ENCODE measurements at regions of chr11 and their contacts with region 1.

Region 1: GRCh38 chr11:82867495-82868082 is 32.6 kb downstream of the PRCP start:
- DNase-seq: peak; percentile 72
- H3K4me3 Mint-ChIP-seq: no peak overlapping the region
- H3K27ac Mint-ChIP-seq: no peak overlapping the region
- H3K4me1 Mint-ChIP-seq: peaks cover 11% of the 10 kb centered on the region
- H3K27me3 Mint-ChIP-seq: peaks cover 2% of the 10 kb centered on the region

Region 2: GRCh38 chr11:82790723-82791484 is 76.7 kb before region 1 on chr11:
- CTCF ChIA-PET with region 1: no interaction called
- POLR2A ChIA-PET with region 1: no interaction called
- DNase-seq: no peak
- H3K4me3 Mint-ChIP-seq: no peak overlapping the region
- H3K27ac Mint-ChIP-seq: no peak overlapping the region
- H3K4me1 Mint-ChIP-seq: no peaks in the 10 kb centered on the region
- H3K27me3 Mint-ChIP-seq: no peaks in the 10 kb centered on the region

Region 3: DNA sequence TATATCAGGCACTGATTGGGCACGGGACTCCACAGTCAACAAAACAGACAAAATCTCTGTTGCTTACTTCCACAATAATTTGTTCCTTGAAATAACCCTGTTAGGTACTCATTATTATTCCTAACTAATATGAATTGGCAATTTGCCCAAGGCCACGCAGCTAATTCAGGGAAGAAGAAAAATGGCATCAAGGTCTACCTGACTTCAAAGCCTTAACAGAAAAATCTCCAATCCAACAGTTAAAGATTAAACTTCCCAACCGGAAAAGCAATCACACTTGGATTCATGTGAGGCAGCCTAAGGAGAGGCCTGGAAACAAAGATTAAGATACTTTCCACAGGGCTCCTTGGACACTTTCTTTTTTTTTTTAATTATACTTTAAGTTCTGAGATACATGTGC is 36.2 kb before region 1 on chr11:
- CTCF ChIA-PET with region 1: no interaction called
- POLR2A ChIA-PET with region 1: no interaction called
- DNase-seq: no peak
- H3K4me3 Mint-ChIP-seq: no peak overlapping the region
- H3K27ac Mint-ChIP-seq: no peak overlapping the region
- H3K4me1 Mint-ChIP-seq: no peaks in the 10 kb centered on the region
- H3K27me3 Mint-ChIP-seq: no peaks in the 10 kb centered on the region

Region 4: DNA sequence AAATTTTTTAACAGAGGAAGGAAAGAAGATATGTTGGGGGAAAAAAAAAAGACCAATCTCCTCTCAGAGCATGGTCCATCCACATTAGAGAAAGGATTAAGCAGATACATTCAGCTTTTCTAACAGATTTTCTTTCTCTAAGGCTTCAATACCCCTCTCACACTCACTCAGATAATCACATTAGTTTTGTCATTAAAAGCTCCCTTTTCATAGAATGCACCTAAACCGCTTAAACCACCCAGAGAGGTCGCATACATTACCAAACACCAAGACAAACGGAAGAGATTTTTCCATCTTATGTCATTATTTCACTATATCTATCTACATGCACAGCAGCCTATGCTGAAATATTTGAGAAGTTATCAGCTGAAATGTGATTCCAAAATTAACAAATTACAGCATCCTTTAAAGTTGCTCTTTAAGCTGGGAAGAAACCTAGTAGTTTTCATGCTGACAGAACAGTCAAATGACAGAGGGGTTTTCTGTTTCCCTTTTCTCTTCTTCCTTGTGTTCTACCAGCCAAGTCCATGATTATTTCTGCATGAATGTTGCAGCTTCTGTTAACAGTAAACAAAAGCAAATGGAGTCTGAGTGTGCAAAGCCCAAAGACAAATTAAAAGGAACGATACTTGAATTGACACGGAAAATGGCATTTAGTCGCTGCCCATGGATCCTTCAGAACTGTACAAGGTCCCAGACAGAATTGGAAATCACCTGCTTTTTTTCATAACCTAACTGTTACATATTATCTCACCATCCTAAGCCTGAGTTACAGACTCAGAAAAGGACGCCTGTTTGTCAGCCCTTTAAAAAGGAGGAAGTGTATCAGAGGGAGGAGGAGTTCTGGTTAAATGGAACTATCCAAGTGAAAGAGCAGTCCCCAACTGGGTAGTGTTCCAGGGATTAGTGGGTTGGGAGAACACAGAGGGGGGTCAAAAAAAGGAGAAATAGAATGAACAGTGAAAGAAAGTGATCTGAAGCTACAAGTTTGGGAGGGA is 21.9 kb before region 1 on chr11:
- CTCF ChIA-PET with region 1: interaction called, 13 read pairs
- POLR2A ChIA-PET with region 1: interaction called, 3 read pairs
- DNase-seq: no peak
- H3K4me3 Mint-ChIP-seq: no peak overlapping the region
- H3K27ac Mint-ChIP-seq: no peak overlapping the region
- H3K4me1 Mint-ChIP-seq: no peaks in the 10 kb centered on the region
- H3K27me3 Mint-ChIP-seq: no peaks in the 10 kb centered on the region

Region 5: GRCh38 chr11:82883853-82884252 is 16.3 kb after region 1 on chr11:
- CTCF ChIA-PET with region 1: interaction called, 19 read pairs
- POLR2A ChIA-PET with region 1: no interaction called
- DNase-seq: no peak
- H3K4me3 Mint-ChIP-seq: no peak overlapping the region
- H3K27ac Mint-ChIP-seq: no peak overlapping the region
- H3K4me1 Mint-ChIP-seq: no peaks in the 10 kb centered on the region
- H3K27me3 Mint-ChIP-seq: no peaks in the 10 kb centered on the region

Region 6: DNA sequence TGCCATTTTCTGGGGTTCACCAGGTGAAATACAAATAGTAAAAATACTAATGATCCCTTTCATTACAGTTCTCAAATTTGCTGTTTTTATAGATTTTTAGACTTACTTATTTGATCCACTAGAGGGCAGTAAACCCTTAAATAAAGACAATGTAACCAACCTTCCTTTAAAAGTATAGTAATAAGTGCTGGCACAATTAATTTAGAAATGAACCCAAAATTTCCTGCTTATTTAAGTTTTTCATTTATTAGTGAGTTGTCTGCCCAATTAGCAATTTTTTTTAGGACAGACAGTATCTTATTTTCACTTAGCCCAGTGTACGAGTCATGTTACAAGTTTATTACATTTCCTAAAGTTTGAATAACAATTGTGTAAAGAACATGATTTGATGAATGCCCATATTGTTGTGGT is 38.7 kb after region 1 on chr11:
- CTCF ChIA-PET with region 1: interaction called, 71 read pairs
- POLR2A ChIA-PET with region 1: interaction called, 14 read pairs
- DNase-seq: no peak
- H3K4me3 Mint-ChIP-seq: no peak overlapping the region
- H3K27ac Mint-ChIP-seq: no peak overlapping the region
- H3K4me1 Mint-ChIP-seq: peaks cover 46% of the 10 kb centered on the region
- H3K27me3 Mint-ChIP-seq: no peaks in the 10 kb centered on the region

Region 7: GRCh38 chr11:83249972-83250593 is 382.5 kb after region 1 on chr11:
- CTCF ChIA-PET with region 1: interaction called, 52 read pairs
- POLR2A ChIA-PET with region 1: no interaction called
- DNase-seq: no peak
- H3K4me3 Mint-ChIP-seq: no peak overlapping the region
- H3K27ac Mint-ChIP-seq: no peak overlapping the region
- H3K4me1 Mint-ChIP-seq: peaks cover 10% of the 10 kb centered on the region
- H3K27me3 Mint-ChIP-seq: no peaks in the 10 kb centered on the region

Measured in activated CD4-positive, alpha-beta memory T cell treated with anti-CD3 and anti-CD28 coated beads, Interleukin-2, amount 10 ng/mL, durations not matched to agents 7 days and 5 days (primary cell).